Ovary (tissue), 10 donors: ENCODE measurements at regions of chr3 and their contacts with region 1.

Region 1: DNA sequence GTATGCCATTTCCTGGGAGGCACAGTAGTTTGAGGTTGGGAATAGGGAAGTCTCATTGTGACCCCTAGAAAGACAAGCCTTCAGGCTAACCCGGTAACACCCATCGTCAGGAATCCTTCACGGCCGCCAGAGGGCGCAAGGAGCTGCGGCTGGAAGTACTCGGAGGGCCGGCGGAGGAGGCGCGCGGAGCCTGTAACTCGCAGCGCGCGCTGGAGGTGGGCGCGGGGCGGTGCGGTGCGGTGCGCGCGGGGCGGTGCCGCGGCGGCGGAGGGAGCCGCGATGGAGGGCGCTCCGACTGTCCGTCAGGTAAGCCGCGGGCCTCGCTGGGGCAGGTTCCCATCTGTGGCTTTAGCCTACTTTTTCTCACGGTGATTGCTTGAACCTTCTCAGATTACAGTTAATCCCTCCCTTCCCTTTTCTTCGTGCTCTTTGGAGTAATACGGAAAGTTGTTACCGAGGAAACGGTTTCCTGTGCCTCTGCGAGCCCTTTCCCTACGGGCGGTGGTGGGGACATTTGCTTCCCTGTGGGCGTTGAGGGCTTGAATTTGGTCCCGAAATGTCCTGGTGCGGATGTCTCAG is at the start of gene GRAMD1C:
- DNase-seq: peak; percentile 78 to 88 (median 82)
- H3K4me3 ChIP-seq: peak within 1 kb of the TSS; percentile 48
- H3K27ac ChIP-seq: no peak within 1 kb of the TSS
- H3K4me1 ChIP-seq: no peaks in the 10 kb centered on the region
- H3K27me3 ChIP-seq: no peaks in the 10 kb centered on the region
- CTCF ChIP-seq: peak; percentile 71 to 77 (median 75)
- EP300 ChIP-seq: no peak
- POLR2A ChIP-seq: no peak
- total RNA-seq, gene GRAMD1C: 0.35 to 10.7 (median 1.8) TPM

Region 2: DNA sequence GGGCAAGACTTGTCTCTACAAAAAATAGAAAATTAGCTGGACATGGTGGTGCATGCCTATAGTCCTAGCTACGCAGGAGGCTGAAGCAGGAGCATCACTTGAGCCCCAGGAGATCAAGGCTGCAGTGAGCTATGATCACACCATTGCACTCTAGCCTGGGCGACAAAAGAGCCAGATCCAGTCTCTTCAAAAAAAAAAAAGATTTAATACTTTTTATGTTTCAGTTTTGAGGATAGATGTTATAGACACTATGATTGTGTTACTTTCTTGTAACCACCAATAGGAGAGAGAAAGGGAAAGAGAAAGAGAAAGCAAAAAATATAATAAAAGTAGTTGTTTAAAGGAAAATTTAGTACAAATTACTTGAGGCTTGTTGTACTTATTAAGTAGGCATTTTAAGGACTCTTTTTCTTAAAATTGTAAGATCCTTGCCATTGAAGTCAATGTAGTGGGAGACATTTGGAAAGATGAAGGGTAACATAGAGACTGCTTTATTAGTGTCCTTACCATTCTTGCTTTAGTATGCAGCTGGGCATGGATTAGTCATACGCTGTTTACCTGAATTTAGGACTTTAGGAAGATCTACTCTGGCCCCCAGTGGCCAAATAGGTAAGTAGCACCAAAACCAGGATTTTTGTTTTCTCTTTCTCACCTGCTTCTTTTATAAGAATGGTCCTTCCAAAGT is 74.0 kb after region 1 on chr3:
- intact Hi-C with region 1: loop called in 1 of 4 experiments (anchors 10 kb)
- DNase-seq: no peak
- H3K4me3 ChIP-seq: no peak overlapping the region
- H3K27ac ChIP-seq: no peak overlapping the region
- H3K4me1 ChIP-seq: no peaks in the 10 kb centered on the region
- H3K27me3 ChIP-seq: no peaks in the 10 kb centered on the region
- CTCF ChIP-seq: peak in 2 of 3 donors; percentile 18 to 37
- EP300 ChIP-seq: no peak
- POLR2A ChIP-seq: no peak

Region 3: DNA sequence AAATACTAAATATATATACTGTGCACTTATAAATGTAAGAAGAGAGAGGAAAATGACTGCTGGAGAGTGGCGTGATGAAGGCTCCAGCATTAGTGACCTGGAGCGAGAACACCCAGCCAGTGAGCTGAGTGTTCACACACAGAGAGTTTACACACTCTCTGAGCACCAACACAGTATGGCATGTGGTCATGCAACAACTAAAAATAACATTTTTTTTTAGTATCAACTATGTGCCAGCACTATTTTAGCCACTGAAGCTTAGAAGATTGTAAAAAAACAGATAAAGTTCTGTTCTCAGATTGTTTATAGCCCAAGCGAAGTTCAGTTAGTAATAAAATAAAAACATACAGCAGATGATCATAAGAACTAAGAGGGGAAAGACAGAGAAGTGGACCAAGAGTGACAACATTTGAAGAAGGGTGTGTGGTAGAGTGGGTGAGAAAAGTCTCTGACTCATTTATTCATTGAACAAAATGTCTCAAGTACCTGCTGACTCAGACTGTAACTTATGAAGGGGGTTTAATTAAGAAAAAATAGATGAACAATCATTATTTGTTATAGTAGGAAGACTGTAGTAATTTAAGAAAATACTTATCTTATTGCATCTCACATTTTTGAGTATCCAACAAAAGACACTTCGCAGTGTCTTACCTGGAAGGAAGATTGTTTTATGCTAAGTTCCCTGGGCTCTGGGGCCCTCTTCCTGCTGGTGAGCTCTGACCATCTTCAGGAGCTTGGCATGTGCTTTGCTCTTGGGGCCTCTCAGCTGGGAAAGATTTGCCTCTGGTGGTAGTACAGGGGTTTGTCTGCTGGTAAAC is 1828.4 kb after region 1 on chr3:
- intact Hi-C with region 1: no loop called
- DNase-seq: no peak
- H3K4me3 ChIP-seq: no peak overlapping the region
- H3K27ac ChIP-seq: no peak overlapping the region
- H3K4me1 ChIP-seq: no peaks in the 10 kb centered on the region
- H3K27me3 ChIP-seq: no peaks in the 10 kb centered on the region
- CTCF ChIP-seq: no peak
- EP300 ChIP-seq: no peak
- POLR2A ChIP-seq: no peak